Ascending aorta (tissue), 2 donors: ENCODE measurements at regions of chr11 and their contacts with region 1.

Region 1: DNA sequence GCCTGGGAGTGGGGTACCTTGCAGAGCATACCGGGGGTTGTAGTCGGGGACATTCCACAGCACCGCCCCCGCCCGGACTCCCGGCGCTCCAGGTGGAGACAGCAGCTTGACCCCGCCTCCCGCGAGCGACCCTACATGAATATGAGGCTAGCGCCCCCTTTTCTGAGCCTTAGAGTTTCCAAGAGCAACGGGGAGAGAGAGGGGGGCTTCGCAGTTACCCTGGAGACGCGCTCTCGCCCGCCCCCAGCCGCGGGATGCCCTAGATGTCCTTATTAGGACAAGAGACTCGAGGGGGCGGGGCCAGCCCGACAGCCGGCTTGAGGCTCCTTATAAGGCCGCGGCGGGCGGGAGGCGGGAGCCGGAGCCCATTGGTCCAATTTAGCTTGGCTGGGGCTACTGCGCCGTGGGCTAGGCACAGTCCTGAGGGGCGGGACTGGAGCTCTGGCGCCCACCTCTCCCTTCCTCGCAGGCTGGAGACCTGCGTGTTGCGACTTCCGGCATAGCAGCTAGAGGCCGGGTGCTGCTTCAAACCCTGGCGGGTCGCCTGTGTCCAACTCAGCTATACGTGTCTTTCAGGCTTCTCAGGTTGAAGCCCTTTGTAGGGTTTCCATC is 927 bp upstream of the MUS81 start:
- DNase-seq: peak; percentile 99 to 100
- H3K4me3 ChIP-seq: peak overlapping the region; percentile 84 to 99
- H3K27ac ChIP-seq: peak overlapping the region; percentile 94 to 99
- H3K4me1 ChIP-seq: peaks cover 21 to 27% of the 10 kb centered on the region in 2 donors
- H3K27me3 ChIP-seq: no peaks in the 10 kb centered on the region
- CTCF ChIP-seq: peak in 1 of 3 experiments; percentile 16

Region 2: GRCh38 chr11:65615229-65615941 is 243.9 kb before region 1 on chr11 and contains the start of gene PCNX3:
- intact Hi-C with region 1: loop called (anchors 2 kb)
- DNase-seq: peak; percentile 100
- H3K4me3 ChIP-seq: peak within 1 kb of the TSS; percentile 95 to 99
- H3K27ac ChIP-seq: peak within 1 kb of the TSS; percentile 90 to 95
- H3K4me1 ChIP-seq: peaks cover 21 to 35% of the 10 kb centered on the region in 2 donors
- H3K27me3 ChIP-seq: no peaks in the 10 kb centered on the region
- CTCF ChIP-seq: no peak
- total RNA-seq, gene PCNX3: 181 TPM

Region 3: DNA sequence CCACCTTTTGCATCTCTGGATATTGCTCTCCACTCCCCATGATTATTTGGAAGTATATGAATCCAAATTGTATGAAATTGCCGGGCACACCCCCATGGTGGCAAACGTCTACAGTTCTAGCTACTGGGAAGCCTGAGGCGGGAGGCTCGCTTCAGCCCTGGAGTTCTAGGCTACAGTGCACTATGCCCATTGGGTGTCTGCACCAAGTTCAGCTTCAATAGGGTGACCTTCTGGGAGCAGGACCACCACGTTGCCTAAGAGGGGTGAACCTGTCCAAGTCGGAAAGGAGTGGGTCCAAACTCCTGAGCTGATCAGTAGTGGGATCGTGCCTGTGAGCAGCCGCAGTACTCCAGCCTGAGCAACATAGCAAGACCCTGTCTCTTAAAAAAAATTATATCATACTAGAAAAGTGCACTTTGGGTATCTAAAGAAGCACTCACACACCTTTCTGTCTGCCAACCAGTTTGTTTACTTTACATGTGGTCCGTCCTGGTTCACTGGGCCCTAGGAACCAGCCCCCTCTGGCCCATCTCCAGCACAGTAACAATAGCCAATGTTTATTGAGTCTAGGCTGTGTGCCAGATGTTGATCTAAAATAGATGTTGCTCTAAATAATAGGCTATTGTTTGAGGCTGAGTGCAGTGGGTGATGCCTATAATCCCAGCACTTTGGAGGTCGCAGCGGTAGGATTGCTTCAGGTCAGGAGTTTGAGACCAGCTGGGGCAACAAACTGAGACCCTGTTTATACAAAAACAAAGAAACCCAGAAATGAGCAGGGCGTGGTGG is 163.7 kb before region 1 on chr11:
- intact Hi-C with region 1: no loop called
- DNase-seq: no peak
- H3K4me3 ChIP-seq: no peak overlapping the region
- H3K27ac ChIP-seq: no peak overlapping the region
- H3K4me1 ChIP-seq: no peaks in the 10 kb centered on the region
- H3K27me3 ChIP-seq: no peaks in the 10 kb centered on the region
- CTCF ChIP-seq: no peak

Region 4: DNA sequence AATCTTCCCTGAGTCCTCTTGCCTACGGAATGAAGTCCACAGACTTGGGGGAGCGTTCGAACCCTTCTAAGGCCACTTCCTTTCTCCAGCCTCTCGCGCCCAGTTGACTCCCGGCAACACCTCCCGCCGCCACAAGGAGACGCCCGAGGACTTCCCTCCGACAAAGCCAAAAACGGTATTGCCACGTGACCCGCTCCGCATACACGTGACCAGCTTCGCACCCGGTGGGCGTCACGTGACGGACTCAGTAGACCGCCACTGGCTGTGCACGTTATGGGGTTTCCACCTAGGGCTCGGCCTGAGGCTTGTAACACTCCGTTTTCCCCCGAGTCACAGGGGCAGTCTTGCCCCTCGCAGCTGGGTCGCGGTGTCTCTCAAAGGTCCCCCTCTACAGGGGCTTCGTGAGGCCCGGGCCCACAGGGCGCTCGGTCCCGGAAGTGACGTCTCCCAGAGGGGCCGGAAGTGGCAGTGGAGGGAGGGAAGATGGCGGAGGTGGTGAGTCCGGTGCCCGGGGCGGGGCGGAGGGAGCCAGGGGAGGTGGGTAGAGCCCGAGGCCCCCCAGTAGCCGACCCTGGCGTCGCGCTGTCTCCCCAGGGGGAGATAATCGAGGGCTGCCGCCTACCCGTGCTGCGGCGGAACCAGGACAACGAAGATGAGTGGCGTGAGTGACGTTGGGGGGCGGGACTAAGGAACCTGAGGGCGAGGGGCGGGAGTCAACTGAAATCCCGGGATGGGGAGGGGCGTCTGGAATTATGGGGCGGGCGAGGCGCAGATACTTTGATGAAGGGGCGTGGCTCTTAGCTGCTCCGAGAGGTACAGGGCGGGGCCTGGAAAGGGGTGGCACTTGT is 147.3 kb before region 1 on chr11 and contains the start of gene KAT5:
- intact Hi-C with region 1: loop called (anchors 1 kb)
- DNase-seq: peak; percentile 96 to 99
- H3K4me3 ChIP-seq: peak within 1 kb of the TSS; percentile 72 to 94
- H3K27ac ChIP-seq: peak within 1 kb of the TSS; percentile 96 to 100
- H3K4me1 ChIP-seq: peaks cover 4 to 19% of the 10 kb centered on the region in 2 donors
- H3K27me3 ChIP-seq: no peaks in the 10 kb centered on the region
- CTCF ChIP-seq: peak; percentile 95 to 99 (median 98)
- total RNA-seq, gene KAT5: 31.0 TPM

Region 5: DNA sequence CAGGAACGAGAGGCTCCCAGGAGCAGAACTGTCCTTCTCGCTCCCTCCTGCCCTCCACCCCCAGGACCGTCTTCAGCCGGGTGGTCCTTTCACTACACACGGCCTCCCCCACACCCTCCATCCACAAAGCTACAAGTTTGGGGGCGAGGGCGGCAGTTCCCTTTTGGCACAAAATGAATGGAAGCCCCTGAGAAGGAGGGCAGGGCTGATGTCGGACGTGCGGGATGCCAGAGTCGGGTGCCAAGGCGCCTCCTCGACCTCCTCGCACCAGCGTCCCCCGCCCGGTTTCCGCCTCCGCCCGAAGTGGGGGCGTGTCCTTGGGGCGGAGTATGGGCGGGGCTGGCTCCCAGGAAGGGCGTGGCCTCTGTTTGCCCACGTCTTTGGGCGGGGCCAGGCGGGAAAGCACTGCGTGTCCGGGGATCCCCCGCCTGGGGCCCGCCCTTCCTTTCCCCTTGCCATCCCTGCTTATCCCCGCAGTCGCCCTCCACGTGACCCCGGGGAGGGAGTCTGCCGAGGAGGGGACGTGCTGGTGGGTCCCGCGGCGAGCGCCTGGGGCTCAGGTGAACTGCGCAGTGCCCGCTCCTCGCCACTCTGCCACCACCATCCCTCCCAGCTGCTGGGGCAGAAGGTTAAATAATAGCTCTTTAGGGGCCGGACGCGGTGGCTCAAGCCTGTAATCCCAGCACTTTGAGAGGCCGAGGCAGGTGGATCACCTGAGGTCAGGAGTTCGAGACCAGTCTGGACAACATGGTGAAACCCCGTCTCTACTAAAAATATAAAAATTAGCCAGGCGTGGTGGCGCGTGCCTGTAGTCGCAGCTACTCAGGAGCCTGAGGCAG is 14.2 kb after region 1 on chr11:
- intact Hi-C with region 1: loop called (anchors 1 kb)
- DNase-seq: peak; percentile 84 to 97
- H3K4me3 ChIP-seq: peak overlapping the region; percentile 67 to 92
- H3K27ac ChIP-seq: peak overlapping the region; percentile 92 to 99
- H3K4me1 ChIP-seq: peaks cover 3 to 17% of the 10 kb centered on the region in 2 donors
- H3K27me3 ChIP-seq: no peaks in the 10 kb centered on the region
- CTCF ChIP-seq: no peak

Region 6: DNA sequence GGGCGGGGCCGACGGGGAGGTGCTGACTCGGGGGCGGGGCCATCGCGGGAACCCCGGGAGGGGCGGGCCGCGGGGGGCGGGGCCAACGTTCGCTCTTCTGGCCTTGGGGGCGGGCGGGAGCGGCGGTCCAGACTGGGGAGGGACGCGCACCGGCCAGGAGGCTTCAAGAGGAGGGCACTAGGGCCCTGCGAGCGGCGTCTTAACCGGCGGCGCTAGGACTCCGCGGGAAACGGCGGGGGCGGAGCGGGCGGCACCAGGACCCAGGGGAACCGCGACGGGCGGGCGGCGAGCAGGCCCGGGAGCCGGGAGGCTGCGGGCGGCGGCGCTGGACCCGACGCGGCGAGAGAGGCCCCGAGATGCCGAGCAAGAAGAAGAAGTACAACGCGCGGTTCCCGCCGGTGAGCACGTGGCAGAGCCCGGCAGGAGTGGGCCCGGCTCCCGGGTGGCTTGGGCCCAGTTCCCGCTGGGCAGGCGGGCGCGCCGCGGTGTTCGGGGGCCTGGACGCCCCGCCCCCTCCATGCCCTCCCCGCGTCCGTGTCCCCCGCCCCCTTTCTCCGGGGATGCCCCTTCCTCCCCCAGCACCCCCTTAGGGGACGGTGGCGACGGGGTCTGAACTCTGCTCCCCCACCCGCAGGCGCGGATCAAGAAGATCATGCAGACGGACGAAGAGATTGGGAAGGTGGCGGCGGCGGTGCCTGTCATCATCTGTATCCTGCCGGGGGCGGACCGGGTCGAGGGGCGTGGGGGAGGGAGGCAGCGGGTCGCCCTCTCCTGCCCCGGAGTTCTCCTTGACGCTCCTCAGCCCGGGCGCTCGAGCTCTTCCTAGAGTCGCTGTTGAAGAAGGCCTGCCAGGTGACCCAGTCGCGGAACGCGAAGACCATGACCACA is 60.1 kb after region 1 on chr11 and contains the start of gene DRAP1:
- intact Hi-C with region 1: loop called (anchors 1 kb)
- DNase-seq: peak; percentile 93 to 99
- H3K4me3 ChIP-seq: peak within 1 kb of the TSS; percentile 79 to 98
- H3K27ac ChIP-seq: peak within 1 kb of the TSS; percentile 96 to 98
- H3K4me1 ChIP-seq: peaks cover 43 to 45% of the 10 kb centered on the region in 2 donors
- H3K27me3 ChIP-seq: no peaks in the 10 kb centered on the region
- CTCF ChIP-seq: peak in 1 of 3 experiments; percentile 2
- total RNA-seq, gene DRAP1: 135 TPM

Region 7: DNA sequence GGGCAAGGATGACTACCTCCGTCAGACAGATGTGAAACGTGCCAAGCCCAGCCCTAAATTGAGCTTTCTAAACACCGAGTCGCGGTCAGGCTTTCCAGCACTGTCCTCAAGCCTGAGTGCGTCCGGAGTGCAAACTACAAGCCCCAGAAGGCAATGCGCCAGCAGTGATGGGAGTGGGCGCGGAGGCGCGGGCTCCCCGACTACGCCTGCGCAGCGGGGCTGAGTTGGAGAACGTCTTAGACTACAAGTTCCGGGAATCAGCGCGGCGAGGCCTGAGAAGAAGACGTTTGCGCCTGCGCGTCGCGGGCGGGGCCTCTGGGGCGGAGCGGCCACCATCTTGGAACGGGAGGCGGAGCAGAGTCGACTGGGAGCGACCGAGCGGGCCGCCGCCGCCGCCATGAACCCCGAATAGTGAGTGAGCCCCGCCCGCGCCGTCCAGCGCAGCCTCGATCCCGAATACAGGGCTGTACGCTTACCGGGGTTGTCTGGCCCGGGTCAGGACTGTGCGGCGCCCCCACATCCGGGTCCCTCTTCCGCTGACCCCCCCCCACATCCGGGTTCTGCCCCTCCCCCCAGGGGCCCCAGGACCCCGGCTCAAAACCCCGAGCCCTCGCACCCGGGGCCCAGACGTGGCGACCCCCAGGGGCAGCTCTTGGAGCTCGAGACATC is 409.1 kb after region 1 on chr11 and contains the start of gene RAB1B:
- intact Hi-C with region 1: loop called (anchors 10 kb)
- DNase-seq: peak; percentile 98 to 100
- H3K4me3 ChIP-seq: peak within 1 kb of the TSS; percentile 63 to 84
- H3K27ac ChIP-seq: peak within 1 kb of the TSS; percentile 94 to 99
- H3K4me1 ChIP-seq: peaks cover 0 to 24% of the 10 kb centered on the region in 2 donors
- H3K27me3 ChIP-seq: no peaks in the 10 kb centered on the region
- CTCF ChIP-seq: no peak
- total RNA-seq, gene RAB1B: 171 TPM